B cell (primary cell): ENCODE measurements at regions of chr7 and their contacts with region 1.

Region 1: GRCh38 chr7:37352974-37353948 is 95.4 kb downstream of the ELMO1 start:
- DNase-seq: peak; percentile 84
- ATAC-seq: peak; percentile 72
- H3K4me3 ChIP-seq: peak overlapping the region; percentile 67 to 91 (median 79)
- H3K4me3 Mint-ChIP-seq: peak overlapping the region; percentile 95
- H3K27ac ChIP-seq: peak overlapping the region; percentile 8 to 81
- H3K27ac Mint-ChIP-seq: peak overlapping the region; percentile 88
- H3K4me1 ChIP-seq: peaks cover 35 to 42% of the 10 kb centered on the region in 2 donors
- H3K4me1 Mint-ChIP-seq: peaks cover 60% of the 10 kb centered on the region
- H3K27me3 ChIP-seq: no peaks in the 10 kb centered on the region
- H3K27me3 Mint-ChIP-seq: no peaks in the 10 kb centered on the region
- CTCF ChIP-seq: peak; percentile 93

Region 2: GRCh38 chr7:36152756-36153570 is 1200.3 kb before region 1 on chr7 and contains the start of gene EEPD1:
- CTCF ChIA-PET with region 1: no interaction called
- POLR2A ChIA-PET with region 1: no interaction called
- intact Hi-C with region 1: loop called (anchors 5 kb)
- DNase-seq: peak; percentile 100
- ATAC-seq: peak; percentile 91
- H3K4me3 ChIP-seq: peak within 1 kb of the TSS; percentile 51 to 79 (median 72)
- H3K4me3 Mint-ChIP-seq: peak within 1 kb of the TSS; percentile 88
- H3K27ac ChIP-seq: peak within 1 kb of the TSS in 1 of 2 donors; percentile 40
- H3K27ac Mint-ChIP-seq: peak within 1 kb of the TSS; percentile 67
- H3K4me1 ChIP-seq: peaks cover 12% of the 10 kb centered on the region in 2 donors
- H3K4me1 Mint-ChIP-seq: peaks cover 16% of the 10 kb centered on the region
- H3K27me3 ChIP-seq: peaks cover 0 to 19% (median 2%) of the 10 kb centered on the region in 4 experiments
- H3K27me3 Mint-ChIP-seq: peaks cover 5% of the 10 kb centered on the region
- CTCF ChIP-seq: no peak
- total RNA-seq, gene EEPD1: 3.8 and 4.1 TPM in 2 replicates

Region 3: GRCh38 chr7:37208528-37208927 is 144.7 kb before region 1 on chr7:
- CTCF ChIA-PET with region 1: interaction called, 52 read pairs
- POLR2A ChIA-PET with region 1: no interaction called
- intact Hi-C with region 1: loop called (anchors 1 kb)
- DNase-seq: peak; percentile 53
- ATAC-seq: peak; percentile 81
- H3K4me3 ChIP-seq: no peak overlapping the region
- H3K4me3 Mint-ChIP-seq: no peak overlapping the region
- H3K27ac ChIP-seq: peak overlapping the region in 1 of 2 donors; percentile 31
- H3K27ac Mint-ChIP-seq: peak overlapping the region; percentile 32
- H3K4me1 ChIP-seq: peaks cover 7 to 11% of the 10 kb centered on the region in 2 donors
- H3K4me1 Mint-ChIP-seq: peaks cover 15% of the 10 kb centered on the region
- H3K27me3 ChIP-seq: no peaks in the 10 kb centered on the region
- H3K27me3 Mint-ChIP-seq: no peaks in the 10 kb centered on the region
- CTCF ChIP-seq: peak; percentile 63

Region 4: GRCh38 chr7:37284805-37285231 is 68.4 kb before region 1 on chr7:
- CTCF ChIA-PET with region 1: interaction called, 208 read pairs
- POLR2A ChIA-PET with region 1: no interaction called
- intact Hi-C with region 1: loop called (anchors 1 kb)
- DNase-seq: peak; percentile 56
- ATAC-seq: peak; percentile 39
- H3K4me3 ChIP-seq: no peak overlapping the region
- H3K4me3 Mint-ChIP-seq: no peak overlapping the region
- H3K27ac ChIP-seq: no peak overlapping the region
- H3K27ac Mint-ChIP-seq: peak overlapping the region; percentile 37
- H3K4me1 ChIP-seq: peaks cover 21 to 23% of the 10 kb centered on the region in 2 donors
- H3K4me1 Mint-ChIP-seq: peaks cover 49% of the 10 kb centered on the region
- H3K27me3 ChIP-seq: no peaks in the 10 kb centered on the region
- H3K27me3 Mint-ChIP-seq: no peaks in the 10 kb centered on the region
- CTCF ChIP-seq: peak; percentile 81

Region 5: DNA sequence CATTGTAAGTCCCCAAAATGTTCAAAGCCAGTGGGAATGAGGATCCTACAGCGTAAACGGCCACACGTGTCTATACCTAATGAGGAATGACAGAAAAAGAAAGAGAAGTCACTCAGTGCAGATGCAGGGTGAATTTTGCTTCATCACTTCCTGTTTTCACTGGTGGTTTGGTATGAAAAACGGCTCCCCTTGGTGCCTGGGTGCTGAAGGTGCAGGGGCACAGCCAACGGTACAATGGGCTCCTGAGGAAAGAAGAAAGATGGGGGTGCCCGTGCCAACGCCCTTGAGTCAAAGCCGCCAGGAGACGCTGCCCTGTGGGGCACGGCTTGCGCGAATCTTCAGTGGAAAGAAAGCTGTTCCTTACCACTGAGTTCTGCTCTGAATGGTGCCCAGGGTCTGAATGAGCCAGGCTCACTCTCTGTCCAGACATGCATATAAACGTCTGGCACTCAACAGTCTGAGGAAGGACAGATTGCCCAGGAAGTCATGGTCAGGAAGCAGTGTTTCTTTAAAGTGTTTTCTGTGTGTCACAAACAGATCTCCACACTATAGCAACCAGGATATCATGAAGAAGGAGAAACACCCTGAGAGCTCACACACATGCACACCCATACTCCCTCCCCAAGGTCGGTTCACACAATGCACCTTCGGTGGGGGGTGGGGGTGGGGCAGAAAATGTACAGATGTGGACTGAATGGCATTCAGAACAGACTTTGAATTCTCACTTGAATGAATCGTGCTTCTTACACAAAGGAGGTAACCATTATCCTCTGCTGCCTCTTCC is 10.4 kb before region 1 on chr7:
- CTCF ChIA-PET with region 1: interaction called, 20 read pairs
- POLR2A ChIA-PET with region 1: interaction called, 5 read pairs
- intact Hi-C with region 1: loop called (anchors 1 kb)
- DNase-seq: peak; percentile 86
- ATAC-seq: peak; percentile 88
- H3K4me3 ChIP-seq: peak overlapping the region; percentile 52 to 82 (median 70)
- H3K4me3 Mint-ChIP-seq: peak overlapping the region; percentile 99
- H3K27ac ChIP-seq: peak overlapping the region; percentile 71 to 75
- H3K27ac Mint-ChIP-seq: peak overlapping the region; percentile 98
- H3K4me1 ChIP-seq: peaks cover 47 to 57% of the 10 kb centered on the region in 2 donors
- H3K4me1 Mint-ChIP-seq: peaks cover 76% of the 10 kb centered on the region
- H3K27me3 ChIP-seq: no peaks in the 10 kb centered on the region
- H3K27me3 Mint-ChIP-seq: no peaks in the 10 kb centered on the region
- CTCF ChIP-seq: peak; percentile 60

Region 6: DNA sequence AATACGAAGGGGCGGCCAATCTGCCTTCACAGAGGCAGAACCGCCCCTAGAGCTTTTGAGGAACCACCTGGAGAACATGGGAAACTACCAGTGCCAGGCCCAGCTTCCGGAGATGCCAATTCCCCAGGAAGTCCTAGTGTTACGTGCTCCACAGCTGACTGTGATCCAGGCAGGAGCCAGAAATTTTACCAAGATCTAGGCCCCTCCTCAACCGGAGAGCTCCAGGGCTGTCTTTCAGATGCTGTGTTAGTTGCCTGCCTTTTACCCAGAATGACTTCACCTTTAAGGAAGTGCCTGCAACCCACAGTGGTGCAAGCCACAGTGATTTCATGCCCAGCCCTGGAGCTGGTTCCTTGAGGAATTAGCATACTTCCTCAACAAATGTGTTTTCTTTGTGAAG is 32.5 kb after region 1 on chr7:
- CTCF ChIA-PET with region 1: no interaction called
- POLR2A ChIA-PET with region 1: no interaction called
- intact Hi-C with region 1: no loop called
- DNase-seq: no peak
- ATAC-seq: no peak
- H3K4me3 ChIP-seq: no peak overlapping the region
- H3K4me3 Mint-ChIP-seq: no peak overlapping the region
- H3K27ac ChIP-seq: no peak overlapping the region
- H3K27ac Mint-ChIP-seq: peak overlapping the region; percentile 60
- H3K4me1 ChIP-seq: peaks cover 13 to 18% of the 10 kb centered on the region in 2 donors
- H3K4me1 Mint-ChIP-seq: peaks cover 36% of the 10 kb centered on the region
- H3K27me3 ChIP-seq: no peaks in the 10 kb centered on the region
- H3K27me3 Mint-ChIP-seq: no peaks in the 10 kb centered on the region
- CTCF ChIP-seq: no peak

Region 7: GRCh38 chr7:37495574-37496184 is 142.4 kb after region 1 on chr7:
- CTCF ChIA-PET with region 1: interaction called, 17 read pairs
- POLR2A ChIA-PET with region 1: no interaction called
- intact Hi-C with region 1: loop called (anchors 1 kb)
- DNase-seq: peak; percentile 52
- ATAC-seq: peak; percentile 68
- H3K4me3 ChIP-seq: no peak overlapping the region
- H3K4me3 Mint-ChIP-seq: no peak overlapping the region
- H3K27ac ChIP-seq: no peak overlapping the region
- H3K27ac Mint-ChIP-seq: no peak overlapping the region
- H3K4me1 ChIP-seq: no peaks in the 10 kb centered on the region
- H3K4me1 Mint-ChIP-seq: no peaks in the 10 kb centered on the region
- H3K27me3 ChIP-seq: no peaks in the 10 kb centered on the region
- H3K27me3 Mint-ChIP-seq: no peaks in the 10 kb centered on the region
- CTCF ChIP-seq: peak; percentile 96

Region 8: DNA sequence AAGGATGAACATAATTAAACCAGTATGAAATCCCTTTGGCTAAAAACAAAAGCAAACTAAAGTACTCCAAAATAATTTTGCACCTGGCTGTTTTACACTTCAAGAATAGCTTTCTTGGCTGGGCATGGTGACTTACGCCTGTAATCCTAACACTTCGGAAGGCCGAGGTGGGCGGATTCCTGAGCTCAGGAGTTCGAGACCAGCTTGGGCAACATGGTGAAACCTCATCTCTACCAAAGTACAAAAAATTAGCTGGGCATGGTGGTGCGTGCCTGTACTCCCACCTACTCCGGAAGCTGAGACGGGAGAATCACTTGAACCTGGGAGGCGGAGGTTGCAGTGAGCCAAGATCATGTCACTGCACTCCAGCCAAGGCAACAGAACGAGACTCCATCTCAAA is 1370.1 kb after region 1 on chr7:
- CTCF ChIA-PET with region 1: no interaction called
- POLR2A ChIA-PET with region 1: no interaction called
- intact Hi-C with region 1: no loop called
- DNase-seq: no peak
- ATAC-seq: no peak
- H3K4me3 ChIP-seq: no peak overlapping the region
- H3K4me3 Mint-ChIP-seq: no peak overlapping the region
- H3K27ac ChIP-seq: no peak overlapping the region
- H3K27ac Mint-ChIP-seq: no peak overlapping the region
- H3K4me1 ChIP-seq: no peaks in the 10 kb centered on the region
- H3K4me1 Mint-ChIP-seq: no peaks in the 10 kb centered on the region
- H3K27me3 ChIP-seq: no peaks in the 10 kb centered on the region
- H3K27me3 Mint-ChIP-seq: no peaks in the 10 kb centered on the region
- CTCF ChIP-seq: no peak